ENCODE measurements at regions of chr12 and their contacts with region 1.

Region 1: DNA sequence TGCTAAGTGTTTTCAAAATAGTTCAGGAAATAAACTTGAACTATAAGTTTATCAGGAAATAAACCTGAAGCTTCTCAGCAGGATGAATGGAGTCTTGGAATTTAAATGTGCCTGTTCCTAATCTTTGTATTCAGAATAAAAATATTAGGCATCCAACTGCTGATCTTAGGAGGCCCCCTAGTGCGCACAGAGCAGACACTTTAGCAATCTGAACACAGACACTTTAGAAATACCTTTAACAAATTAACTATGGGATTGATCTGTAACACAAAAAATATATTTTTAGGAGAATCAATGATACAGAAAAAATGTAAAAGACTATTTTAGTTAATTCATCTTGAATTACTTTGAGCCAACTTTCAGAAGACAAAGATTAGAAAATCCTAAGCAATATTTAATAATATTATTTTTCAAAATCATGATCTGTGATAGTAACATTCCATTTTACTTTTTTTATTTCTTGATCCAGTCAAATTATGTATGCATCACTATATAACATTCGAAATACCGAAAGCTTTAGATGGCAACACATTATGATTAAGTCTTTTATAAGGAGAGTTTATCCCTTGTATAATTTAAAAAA is 80.9 kb downstream of the SLC41A2 start:
- DNase-seq: peak; percentile 40 to 42
- H3K4me3 ChIP-seq: no peak overlapping the region
- H3K27ac ChIP-seq: no peak overlapping the region
- H3K4me1 ChIP-seq: peaks cover 10% of the 10 kb centered on the region; the same call in 1 of the 2 replicates
- H3K27me3 ChIP-seq: no peaks in the 10 kb centered on the region
- CTCF ChIP-seq: peak; percentile 81

Region 2: GRCh38 chr12:104201238-104202001 is 675.8 kb before region 1 on chr12:
- CTCF ChIA-PET with region 1: no interaction called
- POLR2A ChIA-PET with region 1: no interaction called
- intact Hi-C with region 1: loop called (anchors 5 kb)
- DNase-seq: peak; percentile 40 to 49
- H3K4me3 ChIP-seq: no peak overlapping the region
- H3K27ac ChIP-seq: no peak overlapping the region
- H3K4me1 ChIP-seq: peaks cover 9% of the 10 kb centered on the region; the same call in 1 of the 2 replicates
- H3K27me3 ChIP-seq: no peaks in the 10 kb centered on the region
- CTCF ChIP-seq: peak; percentile 92

Region 3: GRCh38 chr12:104372061-104372720 is 505.0 kb before region 1 on chr12:
- CTCF ChIA-PET with region 1: no interaction called
- POLR2A ChIA-PET with region 1: no interaction called
- intact Hi-C with region 1: loop called (anchors 2 kb)
- DNase-seq: peak in 1 of 2 experiments; percentile 32
- H3K4me3 ChIP-seq: no peak overlapping the region
- H3K27ac ChIP-seq: peak overlapping the region; percentile 67; the same call in 1 of the 2 replicates
- H3K4me1 ChIP-seq: peaks cover 65% of the 10 kb centered on the region
- H3K27me3 ChIP-seq: no peaks in the 10 kb centered on the region
- CTCF ChIP-seq: no peak

Region 4: DNA sequence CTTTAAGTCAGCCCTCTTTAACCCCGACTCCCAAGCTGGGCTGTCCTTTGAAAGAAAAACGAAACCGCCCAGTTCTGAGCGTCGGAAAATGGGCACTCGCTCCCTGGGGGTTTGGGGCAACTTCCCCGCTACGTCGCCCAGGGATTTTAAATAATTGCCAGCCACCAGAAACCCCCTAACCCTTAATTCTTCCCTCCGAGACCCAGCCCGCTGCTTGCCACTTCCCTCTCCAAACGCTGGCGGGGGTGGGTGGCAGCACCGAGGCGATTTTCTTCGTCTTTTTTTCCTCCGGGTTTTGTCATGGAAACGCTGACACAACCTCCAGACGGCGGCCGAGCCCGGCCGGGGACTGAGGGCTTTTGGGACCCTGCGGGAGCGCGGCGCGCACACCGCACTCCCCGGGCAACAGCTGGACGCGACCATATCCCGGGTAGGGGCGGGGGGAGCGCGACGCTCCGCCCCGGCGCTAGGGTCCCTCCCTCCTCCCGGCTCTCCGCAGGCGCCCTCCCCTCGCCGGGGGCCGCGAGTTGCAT is 420.7 kb before region 1 on chr12 and contains the start of gene CHST11:
- CTCF ChIA-PET with region 1: no interaction called
- POLR2A ChIA-PET with region 1: no interaction called
- intact Hi-C with region 1: loop called (anchors 1 kb)
- DNase-seq: peak; percentile 59 to 84
- H3K4me3 ChIP-seq: peak within 1 kb of the TSS; percentile 89
- H3K27ac ChIP-seq: peak within 1 kb of the TSS; percentile 58
- H3K4me1 ChIP-seq: peaks cover 41% of the 10 kb centered on the region
- H3K27me3 ChIP-seq: no peaks in the 10 kb centered on the region
- CTCF ChIP-seq: no peak
- total RNA-seq, gene CHST11: 39.9 and 52.2 TPM in 2 replicates

Region 5: GRCh38 chr12:104671407-104672098 is 205.7 kb before region 1 on chr12:
- CTCF ChIA-PET with region 1: no interaction called
- POLR2A ChIA-PET with region 1: no interaction called
- intact Hi-C with region 1: loop called (anchors 5 kb)
- DNase-seq: peak; percentile 97
- H3K4me3 ChIP-seq: peak overlapping the region; percentile 13; the same call in 1 of the 2 replicates
- H3K27ac ChIP-seq: peak overlapping the region; percentile 98
- H3K4me1 ChIP-seq: peaks cover 79% of the 10 kb centered on the region
- H3K27me3 ChIP-seq: no peaks in the 10 kb centered on the region
- CTCF ChIP-seq: no peak

Region 6: DNA sequence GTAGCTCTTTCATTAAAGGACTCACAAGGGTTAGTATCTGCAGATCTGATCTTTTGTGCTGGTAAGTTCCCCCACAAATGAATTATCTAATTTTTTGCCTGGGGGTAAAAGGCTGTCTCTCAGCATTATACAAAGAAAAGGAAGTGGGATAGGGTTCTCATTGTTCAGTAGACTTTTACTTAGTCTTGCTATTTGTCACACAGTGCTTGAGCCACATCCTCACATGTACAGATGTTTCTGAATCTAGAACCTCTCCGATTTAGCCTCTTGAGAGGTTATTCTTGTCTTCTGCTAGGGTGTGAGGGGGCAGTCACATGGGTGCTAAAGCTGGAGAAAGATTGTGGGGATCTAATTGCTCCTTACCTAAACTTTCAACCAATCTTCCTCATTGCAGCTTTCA is 12.1 kb before region 1 on chr12:
- CTCF ChIA-PET with region 1: no interaction called
- POLR2A ChIA-PET with region 1: no interaction called
- intact Hi-C with region 1: no loop called
- DNase-seq: no peak
- H3K4me3 ChIP-seq: no peak overlapping the region
- H3K27ac ChIP-seq: no peak overlapping the region
- H3K4me1 ChIP-seq: peaks cover 14% of the 10 kb centered on the region
- H3K27me3 ChIP-seq: no peaks in the 10 kb centered on the region
- CTCF ChIP-seq: no peak